ENCODE measurements at regions of chr14 and their contacts with region 1.

Region 1: GRCh38 chr14:49828640-49829039 is 23.9 kb downstream of the NEMF start:
- DNase-seq: no peak
- ATAC-seq: no peak
- H3K4me3 Mint-ChIP-seq: no peak overlapping the region
- H3K27ac Mint-ChIP-seq: no peak overlapping the region
- H3K4me1 Mint-ChIP-seq: no peaks in the 10 kb centered on the region
- H3K27me3 Mint-ChIP-seq: no peaks in the 10 kb centered on the region

Region 2: GRCh38 chr14:49783394-49784010 is 45.1 kb before region 1 on chr14:
- CTCF ChIA-PET with region 1: no interaction called
- POLR2A ChIA-PET with region 1: no interaction called
- intact Hi-C with region 1: loop called in 1 of 2 experiments (anchors 5 kb)
- DNase-seq: no peak
- ATAC-seq: no peak
- H3K4me3 Mint-ChIP-seq: no peak overlapping the region
- H3K27ac Mint-ChIP-seq: no peak overlapping the region
- H3K4me1 Mint-ChIP-seq: no peaks in the 10 kb centered on the region
- H3K27me3 Mint-ChIP-seq: no peaks in the 10 kb centered on the region

Measured in activated CD4-positive, alpha-beta T cell treated with anti-CD3 and anti-CD28 coated beads for 36 hours (primary cell).